GM12878 (cell line): ENCODE measurements at regions of chr6 and their contacts with region 1.

Region 1: DNA sequence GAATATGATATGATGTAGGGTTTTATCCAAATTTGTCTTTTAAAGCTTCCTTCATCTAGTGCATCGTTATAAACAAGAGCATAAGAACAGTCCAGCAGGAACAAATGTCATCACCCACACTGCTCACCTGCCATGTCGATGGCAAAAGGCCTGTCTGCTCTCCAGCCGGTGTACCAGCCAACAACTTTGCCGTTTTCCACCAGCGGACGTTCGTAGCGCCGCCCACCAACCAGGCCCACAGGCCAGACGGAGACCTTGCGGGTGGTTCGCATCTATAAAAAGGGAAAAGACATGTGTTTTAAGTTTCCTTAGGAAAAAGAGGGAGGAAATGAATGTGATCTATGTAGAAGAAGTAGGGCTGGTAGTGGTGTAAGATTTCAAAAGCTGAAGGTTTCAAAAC is 62.9 kb downstream of the B3GAT2 start:
- DNase-seq: no peak
- ATAC-seq: no peak
- H3K4me3 ChIP-seq: no peak overlapping the region
- H3K27ac ChIP-seq: no peak overlapping the region
- H3K4me1 ChIP-seq: no peaks in the 10 kb centered on the region
- H3K27me3 ChIP-seq: no peaks in the 10 kb centered on the region; a peak in 2 of 4 replicates
- CTCF ChIP-seq: no peak
- EP300 ChIP-seq: no peak
- POLR2A ChIP-seq: no peak
- RAD21 ChIP-seq: no peak

Region 2: GRCh38 chr6:70846207-70846835 is 47.7 kb before region 1 on chr6:
- CTCF ChIA-PET with region 1: no interaction called
- POLR2A ChIA-PET with region 1: no interaction called
- RAD21 ChIA-PET with region 1: no interaction called
- SMC1A ChIA-PET with region 1: no interaction called
- in situ Hi-C with region 1: no loop called
- intact Hi-C with region 1: no loop called
- DNase-seq: no peak
- ATAC-seq: no peak
- H3K4me3 ChIP-seq: no peak overlapping the region
- H3K27ac ChIP-seq: no peak overlapping the region
- H3K4me1 ChIP-seq: no peaks in the 10 kb centered on the region
- H3K27me3 ChIP-seq: no peaks in the 10 kb centered on the region
- CTCF ChIP-seq: no peak
- EP300 ChIP-seq: no peak
- POLR2A ChIP-seq: no peak
- RAD21 ChIP-seq: no peak

Region 3: GRCh38 chr6:70955441-70956190 is 61.6 kb after region 1 on chr6:
- CTCF ChIA-PET with region 1: interaction called, 3 read pairs
- POLR2A ChIA-PET with region 1: no interaction called
- RAD21 ChIA-PET with region 1: no interaction called
- SMC1A ChIA-PET with region 1: no interaction called
- in situ Hi-C with region 1: no loop called
- intact Hi-C with region 1: loop called (anchors 5 kb)
- DNase-seq: peak; percentile 11
- ATAC-seq: peak; percentile 99
- H3K4me3 ChIP-seq: peak overlapping the region; percentile 74; the same call in 1 of the 2 replicates
- H3K27ac ChIP-seq: no peak overlapping the region
- H3K4me1 ChIP-seq: peaks cover 3% of the 10 kb centered on the region; the same call in 1 of the 2 replicates
- H3K27me3 ChIP-seq: peaks cover 9 to 13% of the 10 kb centered on the region in 2 experiments
- CTCF ChIP-seq: peak; percentile 86 to 89 (median 86)
- EP300 ChIP-seq: no peak
- POLR2A ChIP-seq: no peak
- RAD21 ChIP-seq: peak; percentile 67